Right ventricle myocardium superior (tissue), 1 donor: ENCODE measurements at regions of chr5 and their contacts with region 1.

Region 1: DNA sequence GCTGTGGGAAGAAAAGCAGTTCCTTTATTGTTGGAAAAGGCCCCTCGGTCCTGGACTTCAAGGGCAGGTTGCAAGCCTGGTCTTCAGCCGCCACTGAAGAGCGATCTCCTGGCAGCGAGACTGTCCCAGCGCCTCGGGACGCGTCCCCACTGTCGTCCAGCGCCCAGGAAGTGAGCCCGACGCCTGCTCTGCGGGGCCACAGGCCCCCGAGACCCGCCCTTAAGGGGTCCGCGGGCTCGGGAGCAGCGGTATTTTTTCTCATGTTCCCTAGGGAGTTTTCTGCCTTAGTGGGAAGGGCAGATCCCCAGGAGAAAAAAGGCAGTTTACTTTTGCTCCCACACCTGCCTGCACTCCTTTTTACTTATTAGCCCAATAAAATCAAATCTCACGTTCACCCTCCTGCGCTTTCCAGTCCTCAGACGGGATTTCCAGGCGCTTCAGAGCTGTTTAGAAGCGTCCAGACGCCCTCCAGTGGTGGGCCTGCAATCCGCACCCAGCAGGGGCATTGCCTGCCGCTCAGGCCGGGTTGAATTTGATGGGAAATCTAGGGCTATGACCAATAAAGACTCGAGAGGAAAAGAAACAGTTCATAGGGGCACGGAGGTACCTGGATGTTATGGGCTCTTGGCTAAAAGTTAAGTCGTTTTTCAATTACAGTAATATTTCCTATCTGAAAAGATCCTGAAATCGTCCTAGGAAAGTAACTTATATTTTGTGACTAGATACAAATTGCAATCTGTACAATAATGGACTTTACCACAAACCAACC is 2.8 kb upstream of the EFNA5 start:
- DNase-seq: peak; percentile 87
- ATAC-seq: peak; percentile 59

Region 2: DNA sequence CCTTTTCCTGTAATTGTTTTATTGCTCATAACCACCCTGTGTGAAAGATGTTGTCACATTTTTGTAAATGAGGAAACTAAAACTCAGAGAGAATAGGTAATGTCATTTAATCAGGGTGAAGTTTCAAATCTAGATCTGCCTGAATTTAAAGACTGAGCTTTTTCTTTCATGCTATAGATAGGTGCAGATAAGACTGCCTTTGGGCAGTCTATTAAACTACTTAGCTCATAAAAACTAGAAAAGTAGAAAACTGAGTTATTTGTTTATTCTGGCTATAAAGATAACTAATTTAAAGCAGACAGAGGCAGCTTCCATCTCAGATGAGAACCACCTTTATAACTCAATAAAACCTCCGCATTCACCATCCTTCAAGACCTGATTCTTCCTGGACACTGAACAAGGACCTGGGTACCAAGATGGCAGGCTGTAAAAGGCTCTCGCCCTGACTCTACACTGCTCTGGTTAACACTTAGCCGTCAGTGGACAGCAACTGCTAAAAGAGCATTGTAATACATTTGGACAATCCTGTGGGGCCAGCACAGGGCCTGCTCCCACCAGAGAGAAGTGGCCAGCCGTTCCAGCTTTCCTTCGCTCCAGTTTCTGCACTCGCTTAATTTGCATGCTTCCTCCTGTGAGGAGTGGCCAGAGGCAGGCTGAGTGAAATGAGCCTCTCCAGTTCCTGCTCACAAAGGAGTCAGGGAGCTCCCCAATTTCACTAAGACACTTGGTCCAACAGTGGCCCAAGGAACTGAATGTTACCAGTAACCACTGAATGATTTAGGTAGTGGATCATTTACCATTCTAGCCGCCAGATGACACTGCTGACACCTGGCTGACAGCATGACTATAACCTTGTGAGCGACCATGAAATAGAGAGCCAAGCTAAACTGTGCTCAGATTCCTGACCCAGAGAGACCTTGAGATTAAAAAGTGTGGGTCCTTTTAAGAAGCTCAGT is 569.2 kb before region 1 on chr5:
- intact Hi-C with region 1: loop called (anchors 5 kb)
- DNase-seq: no peak
- ATAC-seq: peak; percentile 95

Region 3: DNA sequence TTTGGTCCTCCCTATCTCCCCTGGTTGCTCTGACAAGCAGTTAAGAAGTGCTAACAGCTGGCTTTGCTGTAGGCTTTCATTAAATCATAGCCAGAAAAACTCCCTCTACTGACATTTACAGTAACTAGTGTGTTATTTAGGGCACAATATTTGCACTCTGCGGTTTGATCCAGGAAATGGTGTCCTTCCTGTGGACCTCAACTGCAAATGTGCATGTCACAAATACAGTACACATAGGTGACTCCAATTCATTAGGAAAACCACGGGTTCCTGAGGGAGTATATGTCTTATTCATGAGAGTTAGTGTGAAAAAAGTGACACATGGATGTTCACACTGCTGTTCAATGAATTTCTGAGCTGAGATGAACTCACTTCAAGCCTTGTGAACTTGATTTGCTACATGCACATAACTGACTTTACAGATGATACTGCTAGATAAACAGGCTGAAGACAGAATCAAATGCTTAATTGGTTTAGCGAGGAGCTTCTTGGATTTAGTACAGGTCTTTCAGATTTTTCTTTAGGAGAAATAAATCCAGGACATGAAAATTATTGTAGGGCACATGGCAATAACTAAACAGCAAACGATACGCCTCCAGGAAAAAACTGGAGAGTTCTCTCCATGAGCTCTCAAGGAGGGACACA is 284.3 kb before region 1 on chr5:
- intact Hi-C with region 1: loop called (anchors 10 kb)
- DNase-seq: no peak
- ATAC-seq: peak; percentile 83

Region 4: GRCh38 chr5:107474716-107475489 is 198.6 kb before region 1 on chr5:
- intact Hi-C with region 1: no loop called
- DNase-seq: no peak
- ATAC-seq: peak; percentile 36

Region 5: DNA sequence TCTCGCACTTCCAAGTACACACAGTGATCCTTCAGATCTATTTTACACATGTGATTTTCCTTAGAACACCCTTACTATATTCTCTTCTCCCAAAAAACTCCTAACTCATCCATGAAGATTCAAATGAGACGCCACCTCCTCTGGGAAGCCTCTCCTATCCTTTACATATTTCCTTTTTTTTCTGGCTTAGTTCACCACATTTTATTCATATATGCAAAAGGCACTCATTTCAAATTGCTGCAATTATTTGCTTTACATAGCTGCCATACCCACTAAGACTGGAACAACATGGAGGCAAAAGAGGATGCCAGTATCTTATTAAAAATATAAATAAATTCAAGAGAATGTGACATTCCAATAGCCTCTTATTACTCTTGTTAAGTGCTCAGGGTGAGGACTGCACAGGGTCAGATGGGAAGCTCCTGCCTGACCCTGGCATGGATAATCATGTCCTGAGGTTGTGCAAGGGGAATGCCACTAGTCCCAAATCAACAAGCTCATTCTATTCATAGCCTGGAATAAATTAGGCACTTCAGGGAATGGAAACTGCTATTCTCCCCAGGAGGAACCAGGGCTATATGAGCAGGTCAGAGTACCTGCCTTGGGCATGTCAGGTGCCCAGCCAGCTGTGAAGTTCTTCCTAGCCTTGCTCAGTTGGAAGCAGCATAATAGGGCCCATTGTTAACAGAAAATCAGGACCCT is 445.4 kb after region 1 on chr5:
- intact Hi-C with region 1: no loop called
- DNase-seq: no peak
- ATAC-seq: peak; percentile 77